HEK293 (cell line): ENCODE measurements at regions of chr3 and their contacts with region 1.

Region 1: DNA sequence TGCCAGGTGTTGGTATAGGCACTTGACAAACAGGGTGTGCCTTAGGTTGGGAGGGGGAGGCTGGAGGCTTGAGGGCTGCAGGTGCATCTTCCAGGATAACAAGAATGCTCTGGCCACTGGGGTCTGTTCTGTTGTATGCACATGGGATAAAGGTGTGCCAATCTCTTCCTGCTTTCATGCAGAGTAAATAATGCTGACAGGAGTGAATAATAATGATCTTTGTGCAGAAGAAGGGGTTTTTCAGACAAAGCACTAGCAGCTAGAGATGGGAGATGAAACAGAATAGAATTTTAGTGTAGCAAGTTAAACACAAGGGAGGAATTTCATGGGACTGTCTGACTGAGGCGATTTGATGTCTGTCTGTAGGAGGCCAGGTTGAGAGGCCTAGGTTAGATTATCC is 1.9 kb upstream of the ROPN1 start:
- H3K4me3 ChIP-seq: no peak overlapping the region
- H3K27ac ChIP-seq: no peak overlapping the region
- H3K4me1 ChIP-seq: no peaks in the 10 kb centered on the region
- CTCF ChIP-seq: no peak

Region 2: DNA sequence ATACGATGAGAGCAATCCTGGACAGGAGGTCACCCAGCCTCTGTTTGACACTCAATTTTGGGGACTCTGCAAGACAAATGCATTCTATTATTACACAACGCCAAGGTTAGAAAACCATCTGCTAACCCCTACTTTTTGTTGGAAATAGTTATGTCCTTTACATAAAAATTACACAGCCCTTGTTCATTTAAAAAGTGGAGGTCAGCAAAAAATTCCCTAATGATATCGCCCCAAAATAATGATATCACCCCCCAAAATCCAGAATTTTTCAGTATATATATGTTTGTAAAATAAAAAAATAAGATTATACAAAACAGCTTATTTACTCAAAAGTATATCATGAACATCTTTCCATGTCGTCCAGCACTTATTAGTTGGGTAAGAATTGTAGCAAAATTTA is 13.3 kb before region 1 on chr3:
- CTCF ChIA-PET with region 1: interaction called, 14 read pairs
- POLR2A ChIA-PET with region 1: no interaction called
- H3K4me3 ChIP-seq: no peak overlapping the region
- H3K27ac ChIP-seq: no peak overlapping the region
- H3K4me1 ChIP-seq: no peaks in the 10 kb centered on the region
- CTCF ChIP-seq: no peak

Region 3: GRCh38 chr3:124131580-124131979 is 137.8 kb after region 1 on chr3:
- CTCF ChIA-PET with region 1: no interaction called
- POLR2A ChIA-PET with region 1: no interaction called
- H3K4me3 ChIP-seq: no peak overlapping the region
- H3K27ac ChIP-seq: no peak overlapping the region
- H3K4me1 ChIP-seq: no peaks in the 10 kb centered on the region
- CTCF ChIP-seq: no peak

Region 4: DNA sequence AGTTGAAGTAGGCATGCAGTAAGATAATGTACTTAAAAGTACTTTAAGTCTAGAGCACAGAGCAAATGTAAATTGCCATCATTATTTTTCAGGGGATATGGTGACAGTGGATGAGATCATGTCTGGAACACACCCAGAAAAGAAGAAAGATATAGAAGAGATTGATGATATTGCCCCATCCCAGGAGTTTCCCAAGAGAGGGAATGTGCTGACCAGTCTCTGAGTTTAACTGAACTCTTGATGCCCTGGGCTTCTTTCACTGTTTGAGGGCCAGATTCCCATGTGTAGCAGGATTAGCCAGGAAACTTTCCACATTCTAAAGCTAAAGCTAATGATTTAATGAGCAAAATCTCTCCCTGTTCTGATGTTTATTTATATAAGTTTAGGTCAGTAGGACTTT is 369.7 kb after region 1 on chr3:
- CTCF ChIA-PET with region 1: no interaction called
- POLR2A ChIA-PET with region 1: no interaction called
- H3K4me3 ChIP-seq: no peak overlapping the region
- H3K27ac ChIP-seq: no peak overlapping the region
- H3K4me1 ChIP-seq: no peaks in the 10 kb centered on the region; the same call in 1 of the 2 replicates
- CTCF ChIP-seq: no peak

Region 5: DNA sequence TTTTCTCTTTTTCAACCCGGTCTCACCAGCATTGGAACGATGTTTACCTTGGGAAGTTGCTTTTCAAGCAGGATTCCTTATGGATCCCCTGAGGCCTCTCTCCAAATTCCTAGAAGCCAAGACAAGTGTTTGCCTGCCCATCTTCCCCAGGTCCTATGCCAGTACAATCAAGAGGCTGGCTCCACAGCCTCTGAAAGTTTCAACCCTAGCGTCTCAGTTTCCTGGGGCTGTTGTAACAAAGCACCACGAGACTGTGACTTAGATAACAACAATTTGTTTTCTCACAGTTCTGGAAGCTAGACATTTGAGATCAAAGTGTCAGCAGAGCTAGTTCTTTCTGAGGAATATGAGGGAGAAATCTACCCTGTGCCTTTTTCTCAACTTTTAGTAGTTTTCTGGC is 389.3 kb after region 1 on chr3:
- CTCF ChIA-PET with region 1: no interaction called
- POLR2A ChIA-PET with region 1: no interaction called
- H3K4me3 ChIP-seq: no peak overlapping the region
- H3K27ac ChIP-seq: no peak overlapping the region
- H3K4me1 ChIP-seq: no peaks in the 10 kb centered on the region
- CTCF ChIP-seq: no peak

Region 6: DNA sequence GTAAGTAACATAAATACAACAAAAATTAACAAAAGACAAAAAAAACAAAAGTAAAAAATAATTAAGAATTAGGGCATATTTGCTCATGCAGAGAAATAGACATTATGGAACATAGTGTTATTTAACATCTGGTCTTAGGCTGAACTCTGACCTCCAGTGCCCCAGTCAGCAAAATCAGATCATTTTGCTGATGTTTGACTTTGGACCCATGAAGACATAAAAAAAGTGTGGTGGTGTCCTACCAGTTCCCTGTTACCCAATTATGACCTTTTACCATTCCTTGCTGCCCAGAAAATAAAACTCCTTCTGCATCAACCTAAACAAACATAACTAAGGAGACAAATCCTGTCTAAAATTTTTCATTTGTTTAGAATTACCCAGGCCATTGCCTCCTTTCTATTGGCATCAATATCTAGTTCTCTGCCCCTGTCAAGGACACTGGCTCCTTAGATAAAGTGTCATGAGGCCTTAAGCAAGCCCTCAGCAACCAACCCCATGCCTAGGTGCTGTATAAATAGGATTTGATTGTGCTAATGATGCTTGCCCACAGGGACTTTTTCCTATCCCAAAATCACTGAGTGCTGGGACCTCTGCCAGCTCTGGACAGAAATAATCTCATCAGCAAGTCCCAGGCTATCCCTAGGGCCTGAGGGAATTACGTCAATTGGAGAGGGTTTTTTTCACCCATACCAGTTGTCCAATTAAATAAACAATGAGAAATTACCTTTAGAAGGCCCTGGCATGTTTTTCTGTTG is 401.9 kb after region 1 on chr3:
- CTCF ChIA-PET with region 1: no interaction called
- POLR2A ChIA-PET with region 1: no interaction called
- H3K4me3 ChIP-seq: no peak overlapping the region
- H3K27ac ChIP-seq: no peak overlapping the region
- H3K4me1 ChIP-seq: peaks cover 12% of the 10 kb centered on the region
- CTCF ChIP-seq: no peak